ENCODE measurements at regions of chr17 and their contacts with region 1.

Region 1: GRCh38 chr17:55527540-55528118 is 16.4 kb upstream of the SMIM36 start:
- DNase-seq: peak; percentile 31
- H3K4me3 Mint-ChIP-seq: no peak overlapping the region
- H3K27ac Mint-ChIP-seq: no peak overlapping the region
- H3K4me1 Mint-ChIP-seq: peaks cover 10% of the 10 kb centered on the region
- H3K27me3 Mint-ChIP-seq: peaks cover 4% of the 10 kb centered on the region

Region 2: DNA sequence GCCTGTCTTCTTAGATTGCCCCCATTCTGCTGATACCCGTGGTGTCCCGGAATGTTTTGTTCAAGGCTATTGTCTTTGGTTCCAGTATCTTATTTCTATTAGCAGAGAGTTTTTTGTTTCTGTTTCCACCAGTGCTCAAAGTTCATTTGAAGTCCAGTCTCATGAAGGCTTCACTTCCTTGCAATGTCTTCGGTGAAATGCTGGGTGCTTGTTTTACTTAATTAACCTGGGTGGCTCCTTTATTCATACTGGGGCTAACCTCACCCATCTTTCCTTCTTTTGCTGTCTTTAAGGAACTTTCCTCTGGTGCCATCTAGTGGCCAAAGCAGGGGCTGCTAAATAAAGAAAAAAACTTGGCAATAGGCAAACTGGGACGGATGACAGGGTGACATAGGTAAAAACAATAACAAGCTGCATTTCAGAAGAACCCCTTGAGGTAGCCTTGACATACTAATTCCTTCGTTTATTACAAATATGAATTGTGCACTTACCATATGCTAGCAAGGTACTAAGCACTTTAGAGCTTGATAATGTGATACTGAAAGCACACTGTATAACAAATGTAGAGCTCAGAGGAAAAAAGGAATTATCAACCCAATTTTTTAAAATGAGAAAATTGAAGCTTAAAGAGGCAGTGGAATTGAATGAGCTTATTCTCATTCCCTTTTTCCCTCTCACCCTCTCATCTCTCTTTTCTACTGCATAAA is 13.6 kb before region 1 on chr17:
- CTCF ChIA-PET with region 1: interaction called, 13 read pairs
- POLR2A ChIA-PET with region 1: no interaction called
- intact Hi-C with region 1: no loop called
- DNase-seq: peak; percentile 75
- H3K4me3 Mint-ChIP-seq: no peak overlapping the region
- H3K27ac Mint-ChIP-seq: no peak overlapping the region
- H3K4me1 Mint-ChIP-seq: no peaks in the 10 kb centered on the region
- H3K27me3 Mint-ChIP-seq: peaks cover 6% of the 10 kb centered on the region

Region 3: GRCh38 chr17:55587608-55588139 is 60.0 kb after region 1 on chr17:
- CTCF ChIA-PET with region 1: interaction called, 14 read pairs
- POLR2A ChIA-PET with region 1: no interaction called
- intact Hi-C with region 1: loop called (anchors 1 kb)
- DNase-seq: no peak
- H3K4me3 Mint-ChIP-seq: no peak overlapping the region
- H3K27ac Mint-ChIP-seq: no peak overlapping the region
- H3K4me1 Mint-ChIP-seq: peaks cover 19% of the 10 kb centered on the region
- H3K27me3 Mint-ChIP-seq: no peaks in the 10 kb centered on the region

Region 4: DNA sequence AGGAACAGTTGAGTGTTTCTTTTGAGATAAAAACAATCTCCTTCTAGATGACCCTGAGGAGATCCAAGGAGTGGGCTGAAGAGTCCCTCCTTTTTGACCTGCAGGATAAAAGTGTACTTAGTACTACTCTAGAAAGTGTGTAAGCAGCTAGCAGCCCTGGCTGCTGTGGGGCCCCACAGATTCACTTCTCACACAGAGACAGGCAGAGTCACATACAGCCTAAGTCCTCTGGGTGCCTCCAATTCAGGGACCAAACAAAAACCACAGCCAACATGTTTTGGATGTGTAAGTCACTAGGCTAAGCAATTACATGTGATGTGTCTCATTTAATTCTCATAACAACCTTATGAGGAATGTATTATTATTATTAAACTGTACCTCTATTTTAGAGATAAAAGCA is 97.9 kb after region 1 on chr17:
- CTCF ChIA-PET with region 1: interaction called, 5 read pairs
- POLR2A ChIA-PET with region 1: interaction called, 5 read pairs
- intact Hi-C with region 1: loop called (anchors 1 kb)
- DNase-seq: peak; percentile 52
- H3K4me3 Mint-ChIP-seq: no peak overlapping the region
- H3K27ac Mint-ChIP-seq: no peak overlapping the region
- H3K4me1 Mint-ChIP-seq: peaks cover 19% of the 10 kb centered on the region
- H3K27me3 Mint-ChIP-seq: peaks cover 16% of the 10 kb centered on the region

Region 5: GRCh38 chr17:55717898-55718735 is 190.5 kb after region 1 on chr17:
- CTCF ChIA-PET with region 1: interaction called, 116 read pairs
- POLR2A ChIA-PET with region 1: no interaction called
- intact Hi-C with region 1: loop called (anchors 1 kb)
- DNase-seq: peak; percentile 74
- H3K4me3 Mint-ChIP-seq: no peak overlapping the region
- H3K27ac Mint-ChIP-seq: no peak overlapping the region
- H3K4me1 Mint-ChIP-seq: no peaks in the 10 kb centered on the region
- H3K27me3 Mint-ChIP-seq: peaks cover 25% of the 10 kb centered on the region

Region 6: GRCh38 chr17:55770148-55770870 is 242.7 kb after region 1 on chr17:
- CTCF ChIA-PET with region 1: interaction called, 41 read pairs
- POLR2A ChIA-PET with region 1: no interaction called
- intact Hi-C with region 1: loop called (anchors 1 kb)
- DNase-seq: no peak
- H3K4me3 Mint-ChIP-seq: no peak overlapping the region
- H3K27ac Mint-ChIP-seq: no peak overlapping the region
- H3K4me1 Mint-ChIP-seq: no peaks in the 10 kb centered on the region
- H3K27me3 Mint-ChIP-seq: no peaks in the 10 kb centered on the region